ENCODE measurements at regions of chr4 and their contacts with region 1.

Region 1: DNA sequence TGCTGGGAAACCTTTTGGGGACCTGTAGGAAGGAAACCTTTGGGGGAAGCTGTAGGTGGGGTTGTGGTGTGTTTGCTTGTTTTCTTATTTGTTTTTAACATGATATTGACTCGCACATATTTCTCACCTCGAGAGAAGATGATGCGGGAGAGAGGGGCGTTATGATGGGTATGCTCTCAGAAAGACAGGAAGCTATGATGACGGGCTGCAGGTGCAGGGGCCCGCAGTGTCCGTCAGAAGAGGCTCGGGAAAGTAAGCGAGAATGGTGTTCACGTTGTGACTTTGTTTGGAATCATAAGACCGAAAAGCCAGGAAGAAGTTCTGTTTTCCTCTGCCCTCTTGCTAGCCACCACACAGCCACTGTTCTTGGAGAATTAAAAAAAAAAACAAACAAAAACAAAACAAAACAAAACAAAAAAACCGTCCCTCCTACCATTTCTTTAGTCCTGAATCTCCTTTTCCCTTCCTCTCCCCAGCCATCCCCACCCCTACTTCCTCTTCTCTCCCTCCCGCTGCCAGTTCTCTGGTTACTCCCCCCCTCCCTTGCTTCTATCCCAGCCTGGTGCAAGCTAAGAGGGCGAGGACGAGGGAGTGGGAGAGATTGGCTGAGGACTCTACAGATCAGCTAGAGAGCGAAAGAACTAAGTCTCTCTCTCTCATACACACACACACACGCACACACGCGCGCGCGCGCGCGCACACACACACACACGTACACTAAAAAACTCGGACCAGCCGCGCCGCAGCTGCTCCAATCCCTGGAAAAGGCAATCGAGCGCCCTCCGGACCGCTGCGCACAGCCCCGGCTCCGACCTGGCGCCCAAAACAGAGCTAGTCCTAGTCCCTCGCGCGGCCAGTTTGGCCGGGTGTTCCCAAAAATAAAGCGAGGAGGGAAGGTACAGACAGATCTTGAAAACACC is at the start of gene BMP3:
- DNase-seq: no peak
- H3K4me3 ChIP-seq: peak within 1 kb of the TSS; percentile 51
- CTCF ChIP-seq: no peak

Region 2: GRCh38 chr4:80215449-80216052 is 814.8 kb before region 1 on chr4:
- in situ Hi-C with region 1: loop called (anchors 10 kb)
- DNase-seq: no peak
- H3K4me3 ChIP-seq: no peak overlapping the region
- CTCF ChIP-seq: peak; percentile 24

Region 3: GRCh38 chr4:81003597-81004111 is 26.7 kb before region 1 on chr4:
- in situ Hi-C with region 1: no loop called
- DNase-seq: no peak
- H3K4me3 ChIP-seq: no peak overlapping the region
- CTCF ChIP-seq: no peak